ENCODE measurements at regions of chr21 and their contacts with region 1.

Region 1: GRCh38 chr21:32569261-32570230 is 15.8 kb downstream of the TCP10L start:
- DNase-seq: peak; percentile 73 to 94
- ATAC-seq: peak; percentile 89 to 93 (median 92)
- H3K4me3 ChIP-seq: peak overlapping the region; percentile 52
- H3K4me3 Mint-ChIP-seq: peak overlapping the region; percentile 94
- H3K27ac ChIP-seq: peak overlapping the region; percentile 36
- H3K27ac Mint-ChIP-seq: peak overlapping the region; percentile 70 to 89
- H3K4me1 ChIP-seq: peaks cover 17% of the 10 kb centered on the region
- H3K4me1 Mint-ChIP-seq: peaks cover 22 to 23% of the 10 kb centered on the region in 2 donors
- H3K27me3 ChIP-seq: no peaks in the 10 kb centered on the region
- H3K27me3 Mint-ChIP-seq: no peaks in the 10 kb centered on the region
- CTCF ChIP-seq: peak; percentile 87

Region 2: DNA sequence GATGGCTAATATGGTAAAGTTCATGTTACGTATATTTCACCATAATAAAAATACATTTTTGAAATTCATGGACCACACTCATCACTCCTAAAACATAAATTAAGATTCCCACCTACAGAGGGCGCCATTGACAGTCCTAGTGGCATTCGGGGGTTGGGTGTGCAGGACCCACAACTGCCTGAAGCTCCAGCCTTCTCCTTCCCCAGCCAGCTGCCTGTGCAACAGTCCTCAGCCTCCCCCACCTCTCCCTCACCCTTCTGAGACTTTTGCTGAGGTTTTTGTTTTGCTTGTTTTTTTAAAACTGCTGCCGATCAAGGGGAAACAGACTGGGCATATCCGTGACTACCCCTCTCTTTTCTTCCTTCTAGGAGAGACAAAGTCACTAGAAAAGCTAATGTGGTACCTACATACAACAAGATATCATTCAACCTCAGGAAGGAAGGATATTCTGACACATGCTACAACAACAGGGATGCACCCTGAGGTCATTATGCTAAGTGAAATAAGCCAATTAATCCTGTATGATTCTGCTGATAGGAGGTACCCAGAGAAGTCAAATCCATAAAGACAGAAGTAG is 166.3 kb before region 1 on chr21:
- intact Hi-C with region 1: loop called (anchors 1 kb)
- DNase-seq: peak; percentile 25 to 83
- ATAC-seq: peak; percentile 56 to 74 (median 61)
- H3K4me3 ChIP-seq: no peak overlapping the region
- H3K4me3 Mint-ChIP-seq: no peak overlapping the region
- H3K27ac ChIP-seq: no peak overlapping the region
- H3K27ac Mint-ChIP-seq: no peak overlapping the region
- H3K4me1 ChIP-seq: peaks cover 28% of the 10 kb centered on the region
- H3K4me1 Mint-ChIP-seq: peaks cover 20 to 25% of the 10 kb centered on the region in 2 donors
- H3K27me3 ChIP-seq: no peaks in the 10 kb centered on the region
- H3K27me3 Mint-ChIP-seq: peaks cover 0 to 6% of the 10 kb centered on the region in 2 donors
- CTCF ChIP-seq: peak; percentile 68